ENCODE measurements at regions of chr6 and their contacts with region 1.

Region 1: DNA sequence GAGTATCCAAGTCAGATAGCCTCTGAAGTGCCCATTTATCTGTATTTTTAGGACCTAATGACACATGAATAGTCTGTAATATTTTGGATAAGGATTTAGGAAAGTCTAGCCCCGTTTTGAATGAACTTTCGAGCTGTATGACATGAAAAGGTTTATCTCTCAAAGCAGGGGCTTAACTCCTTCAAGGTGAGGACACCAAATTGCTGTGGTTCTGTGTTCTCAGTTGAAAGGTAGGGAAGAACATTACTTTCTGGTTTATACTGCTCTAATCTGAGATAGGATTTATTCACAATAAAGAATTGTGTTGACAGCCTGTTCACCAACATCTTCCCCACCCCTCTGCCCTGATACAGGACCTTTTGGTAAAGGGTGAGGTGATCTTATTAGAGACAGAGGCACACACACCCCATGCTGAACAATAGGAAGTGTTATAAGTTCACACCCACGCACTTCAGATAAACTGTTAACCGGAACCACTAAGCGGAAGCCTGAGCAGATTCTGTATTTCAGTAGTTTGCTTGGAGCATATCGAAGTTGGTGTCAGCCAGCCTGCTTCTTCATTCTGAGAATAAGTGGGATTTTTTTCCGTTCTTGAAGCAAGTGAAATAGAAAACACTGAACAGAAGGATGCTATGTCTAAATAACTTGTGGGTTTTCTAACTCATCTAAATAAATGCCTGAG is 223.3 kb downstream of the TMEM242 start:
- DNase-seq: peak; percentile 67
- H3K4me3 Mint-ChIP-seq: peak overlapping the region; percentile 46
- H3K27ac Mint-ChIP-seq: peak overlapping the region; percentile 91
- H3K4me1 Mint-ChIP-seq: peaks cover 56% of the 10 kb centered on the region
- H3K27me3 Mint-ChIP-seq: no peaks in the 10 kb centered on the region

Region 2: DNA sequence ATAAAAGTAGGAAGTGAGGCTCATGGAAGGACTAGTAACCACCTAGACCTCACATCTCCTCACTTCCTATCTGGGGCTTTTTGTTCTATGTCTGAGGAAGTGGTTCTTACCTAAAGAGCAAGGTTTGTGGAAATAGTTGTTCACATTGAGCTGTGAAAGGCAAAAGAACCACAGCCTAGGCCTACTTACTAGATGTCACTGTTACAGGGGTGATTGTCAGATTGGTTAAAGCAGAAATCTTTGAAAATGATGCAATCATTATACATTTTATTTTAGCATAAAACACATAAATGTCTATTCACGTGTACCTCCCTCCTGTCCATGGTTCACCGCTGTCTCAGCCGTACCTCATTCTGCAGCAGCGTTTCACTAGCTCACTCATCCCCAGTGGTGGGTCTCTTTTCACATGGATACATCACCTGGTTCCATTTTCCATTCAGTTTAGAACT is 45.5 kb before region 1 on chr6:
- CTCF ChIA-PET with region 1: no interaction called
- POLR2A ChIA-PET with region 1: interaction called, 10 read pairs
- DNase-seq: peak; percentile 36
- H3K4me3 Mint-ChIP-seq: no peak overlapping the region
- H3K27ac Mint-ChIP-seq: peak overlapping the region; percentile 85
- H3K4me1 Mint-ChIP-seq: peaks cover 33% of the 10 kb centered on the region
- H3K27me3 Mint-ChIP-seq: no peaks in the 10 kb centered on the region